ENCODE measurements at regions of chr4 and their contacts with region 1.

Region 1: DNA sequence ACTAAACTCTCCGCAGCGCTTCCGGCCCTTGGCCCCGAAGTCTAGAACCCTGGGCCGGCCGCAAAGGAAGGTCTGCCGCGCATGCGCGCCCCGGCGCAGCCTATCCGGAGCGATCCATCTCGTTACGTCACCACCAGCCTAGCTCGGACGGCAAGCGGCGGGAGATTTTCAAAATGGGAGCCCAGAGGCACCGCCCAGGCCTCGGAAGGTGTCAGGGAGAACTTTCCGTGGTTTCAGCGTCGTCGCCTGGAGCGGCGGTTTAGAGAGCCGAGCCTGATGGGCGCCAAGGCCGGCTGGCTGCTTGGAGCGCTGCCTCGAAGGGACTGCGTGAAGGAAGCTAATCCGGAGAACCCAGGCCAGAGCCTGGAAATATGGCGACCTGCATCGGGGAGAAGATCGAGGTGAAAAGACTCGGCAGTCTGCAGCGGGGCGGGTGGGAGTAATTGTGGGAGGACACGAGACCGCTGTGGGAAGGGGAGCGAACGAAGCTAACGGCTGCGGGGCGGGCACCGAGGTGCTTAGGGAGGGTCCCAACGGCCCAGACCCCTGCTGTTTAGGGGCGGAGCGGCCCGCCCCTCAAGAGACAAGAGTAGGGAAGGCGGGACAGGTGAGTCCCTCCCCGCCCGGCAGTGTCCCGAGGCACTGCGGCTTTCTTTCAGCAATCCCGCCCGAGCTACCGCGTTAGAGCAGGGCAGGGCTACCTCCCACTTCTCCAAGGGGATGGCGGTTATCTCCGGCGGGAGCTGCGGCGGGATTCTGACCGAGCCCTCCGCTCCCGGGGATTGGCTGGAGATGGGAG is at the start of gene PLK4:
- DNase-seq: peak; percentile 98
- H3K4me3 ChIP-seq: peak within 1 kb of the TSS; percentile 74
- H3K27ac ChIP-seq: peak within 1 kb of the TSS; percentile 97
- H3K4me1 ChIP-seq: peaks cover 23% of the 10 kb centered on the region
- H3K27me3 ChIP-seq: no peaks in the 10 kb centered on the region
- CTCF ChIP-seq: no peak
- total RNA-seq, gene PLK4: 46.9 and 52.4 TPM in 2 replicates

Region 2: DNA sequence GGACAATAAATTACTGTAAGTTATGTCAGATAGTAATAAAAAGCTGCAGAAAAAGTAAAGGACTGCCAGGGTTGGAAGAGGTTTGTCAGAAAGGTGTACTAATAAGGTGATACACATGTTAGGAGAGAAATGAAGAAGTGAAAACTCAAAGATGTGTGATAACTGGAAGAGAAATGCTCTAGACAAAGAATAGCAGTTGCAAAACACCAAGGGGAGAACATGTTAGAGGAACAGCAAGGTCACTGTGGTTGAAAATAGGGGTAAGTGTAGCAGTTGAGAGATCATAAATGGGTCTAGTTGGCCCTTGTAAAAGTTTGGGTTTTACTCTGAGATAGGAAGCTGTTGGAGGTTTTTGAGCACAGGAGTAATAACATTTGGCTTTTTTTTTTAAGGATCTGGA is 51.9 kb before region 1 on chr4:
- CTCF ChIA-PET with region 1: no interaction called
- POLR2A ChIA-PET with region 1: no interaction called
- intact Hi-C with region 1: loop called (anchors 5 kb)
- DNase-seq: no peak
- H3K4me3 ChIP-seq: no peak overlapping the region
- H3K27ac ChIP-seq: no peak overlapping the region
- H3K4me1 ChIP-seq: peaks cover 17% of the 10 kb centered on the region
- H3K27me3 ChIP-seq: peaks cover 85% of the 10 kb centered on the region
- CTCF ChIP-seq: no peak

Measured in A673 (cell line).